Thyroid gland (tissue), 4 donors: ENCODE measurements at regions of chr20 and their contacts with region 1.

Region 1: DNA sequence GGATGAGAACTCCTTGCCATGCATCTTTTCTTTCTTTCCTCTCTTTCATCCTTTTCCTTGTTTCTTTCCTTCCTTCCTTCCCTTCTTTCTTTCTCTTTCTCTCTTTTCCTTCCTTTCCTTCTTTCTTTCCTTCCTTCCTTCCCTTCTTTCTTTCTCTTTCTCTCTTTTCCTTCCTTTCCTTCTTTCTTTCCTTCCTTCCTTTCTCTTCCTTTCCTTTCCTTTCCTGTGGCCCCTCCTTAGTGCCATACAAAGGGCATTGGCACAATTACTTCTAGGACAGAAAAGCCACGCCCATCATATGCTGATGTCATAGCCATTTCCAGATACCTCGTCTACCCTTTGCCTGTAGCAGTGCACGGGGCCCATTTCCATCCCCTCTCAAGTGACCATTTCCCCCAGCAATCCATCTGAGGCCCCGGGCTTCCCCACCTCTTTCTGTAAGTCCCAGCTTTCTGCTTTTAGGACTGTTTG is 2.2 kb upstream of the CENPB start:
- DNase-seq: no peak
- H3K4me3 ChIP-seq: no peak overlapping the region
- H3K27ac ChIP-seq: no peak overlapping the region
- H3K4me1 ChIP-seq: peaks cover 17 to 24% of the 10 kb centered on the region in 2 donors
- H3K27me3 ChIP-seq: no peaks in the 10 kb centered on the region
- CTCF ChIP-seq: no peak
- POLR2A ChIP-seq: no peak

Region 2: DNA sequence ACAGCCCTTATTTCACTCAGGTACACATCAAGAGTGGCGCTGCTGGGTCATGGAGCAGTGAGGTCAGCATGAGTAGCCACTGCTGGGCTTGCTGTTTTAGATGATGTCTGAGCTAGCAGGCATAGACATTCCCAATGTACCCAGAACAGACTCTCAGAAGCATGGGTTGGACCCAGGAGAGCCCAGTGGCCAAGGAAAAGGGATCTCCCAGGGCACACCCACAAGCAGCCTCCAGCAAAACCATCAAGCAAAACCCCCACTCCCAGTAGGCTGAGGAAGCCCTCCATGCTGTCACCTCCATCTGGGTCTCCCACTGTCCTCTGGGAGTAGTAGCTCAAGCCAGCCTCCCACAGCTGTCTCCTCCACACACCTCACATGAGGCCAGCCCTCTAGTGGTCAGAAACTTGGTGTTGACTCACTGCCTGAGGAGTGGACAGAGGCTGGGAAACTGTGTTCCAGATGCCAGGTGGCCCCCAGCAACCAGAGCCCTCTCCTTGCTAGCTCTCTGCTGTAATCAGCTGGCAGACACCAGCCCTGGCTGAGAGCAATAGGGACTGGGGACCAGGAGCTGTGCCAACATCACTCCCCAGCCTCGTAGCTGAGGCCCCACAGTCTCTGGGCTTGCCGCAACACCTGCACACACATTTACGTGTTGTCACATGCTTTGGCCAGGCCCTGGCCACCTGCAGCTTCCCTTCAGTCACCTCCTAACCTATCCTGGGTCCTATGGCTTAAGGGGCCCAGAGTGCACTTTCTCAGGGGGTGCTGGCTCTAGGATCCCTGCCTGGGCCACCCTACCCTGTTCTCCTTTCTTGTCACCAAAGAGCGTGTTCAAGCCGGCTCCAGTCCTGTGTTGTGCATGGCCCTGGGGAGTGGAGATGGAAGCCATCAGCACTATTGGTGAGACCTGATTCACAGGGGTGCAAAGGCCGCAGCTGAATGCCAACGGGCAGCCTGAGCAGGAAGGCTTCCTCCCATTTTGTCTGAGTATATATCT is 29.7 kb after region 1 on chr20:
- intact Hi-C with region 1: loop called (anchors 2 kb)
- DNase-seq: peak; percentile 72 to 73
- H3K4me3 ChIP-seq: no peak overlapping the region
- H3K27ac ChIP-seq: peak overlapping the region in 2 of 3 donors; percentile 12 to 38
- H3K4me1 ChIP-seq: peaks cover 7 to 29% of the 10 kb centered on the region in 2 donors
- H3K27me3 ChIP-seq: no peaks in the 10 kb centered on the region
- CTCF ChIP-seq: peak; percentile 23 to 65 (median 54)
- POLR2A ChIP-seq: no peak